ENCODE measurements at regions of chr21 and their contacts with region 1.

Region 1: DNA sequence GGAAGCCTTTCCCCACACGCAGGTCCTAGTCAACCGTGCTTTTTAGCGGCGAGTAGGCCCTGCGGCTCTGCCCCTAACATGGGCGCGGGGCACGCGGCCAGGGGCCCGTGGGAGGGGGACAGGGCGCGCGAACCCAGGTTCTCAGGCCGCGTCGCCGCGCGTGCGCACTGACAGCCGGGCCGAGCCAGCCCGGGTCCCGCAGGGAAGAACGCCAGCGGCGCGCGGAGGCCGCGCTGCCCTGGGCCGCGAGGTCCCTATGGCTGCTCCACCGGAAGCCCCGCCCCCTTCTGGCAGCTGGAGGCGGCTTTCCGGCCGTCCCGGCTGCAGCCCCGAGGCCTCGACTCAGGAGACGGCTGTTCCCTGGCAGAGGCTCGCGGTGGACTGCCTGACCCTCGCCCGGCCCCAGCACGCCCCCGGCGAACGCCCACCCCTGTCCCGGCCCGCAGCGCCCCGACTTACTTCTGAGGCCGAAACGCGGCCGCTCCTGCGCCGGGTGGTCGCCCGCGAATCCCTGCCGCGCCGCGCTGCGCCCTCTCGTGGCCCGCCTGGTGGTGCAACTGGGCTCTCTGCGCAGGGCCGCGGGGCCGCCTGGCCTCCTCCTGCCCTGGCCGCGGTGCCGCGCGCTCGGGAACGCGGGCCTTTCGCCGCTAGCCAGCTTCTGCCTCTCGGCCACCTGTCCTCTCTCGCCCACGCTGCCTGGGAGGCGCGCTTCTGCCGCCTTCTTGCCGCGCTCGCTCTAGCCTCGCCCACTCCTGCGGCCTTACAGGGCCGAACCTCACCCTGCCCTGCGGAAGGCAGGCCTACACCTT is 16.6 kb upstream of the RIPPLY3 start:
- DNase-seq: peak; percentile 89
- H3K4me3 Mint-ChIP-seq: peak overlapping the region; percentile 80
- H3K27ac Mint-ChIP-seq: peak overlapping the region; percentile 65
- H3K4me1 Mint-ChIP-seq: peaks cover 38% of the 10 kb centered on the region
- H3K27me3 Mint-ChIP-seq: no peaks in the 10 kb centered on the region

Region 2: GRCh38 chr21:36908260-36908908 is 81.5 kb before region 1 on chr21:
- CTCF ChIA-PET with region 1: no interaction called
- intact Hi-C with region 1: no loop called
- DNase-seq: no peak
- H3K4me3 Mint-ChIP-seq: no peak overlapping the region
- H3K27ac Mint-ChIP-seq: no peak overlapping the region
- H3K4me1 Mint-ChIP-seq: peaks cover 15% of the 10 kb centered on the region
- H3K27me3 Mint-ChIP-seq: no peaks in the 10 kb centered on the region

Region 3: DNA sequence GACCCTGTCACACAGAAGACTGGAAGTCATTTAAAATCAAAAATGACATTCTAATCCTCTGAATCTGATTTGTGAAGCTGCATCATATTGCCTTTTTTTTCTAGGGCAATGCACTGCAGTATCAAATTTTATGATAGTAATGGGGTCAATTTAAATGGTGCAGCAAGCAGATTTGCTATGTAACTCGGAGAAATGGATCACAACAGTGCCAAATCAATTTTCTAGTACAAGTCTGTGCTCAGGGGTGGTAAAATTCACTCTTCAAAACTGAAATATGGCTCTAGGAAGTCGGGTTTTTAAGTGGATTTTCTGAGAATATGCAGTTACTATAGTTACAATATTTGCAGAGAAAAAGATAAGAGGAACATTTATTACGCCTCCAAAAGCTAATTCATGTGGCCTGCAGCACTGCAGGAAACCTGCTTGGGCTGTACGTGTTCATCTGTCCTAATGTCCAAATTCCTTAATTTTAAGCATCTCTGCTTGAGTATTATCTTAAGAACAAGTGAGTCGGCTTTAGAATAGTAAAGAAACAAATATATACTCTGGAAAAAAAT is 55.0 kb before region 1 on chr21:
- CTCF ChIA-PET with region 1: interaction called, 3 read pairs
- intact Hi-C with region 1: loop called (anchors 1 kb)
- DNase-seq: no peak
- H3K4me3 Mint-ChIP-seq: no peak overlapping the region
- H3K27ac Mint-ChIP-seq: no peak overlapping the region
- H3K4me1 Mint-ChIP-seq: no peaks in the 10 kb centered on the region
- H3K27me3 Mint-ChIP-seq: no peaks in the 10 kb centered on the region

Region 4: GRCh38 chr21:36966066-36966820 is 23.7 kb before region 1 on chr21 and contains the start of gene HLCS:
- CTCF ChIA-PET with region 1: interaction called, 12 read pairs
- intact Hi-C with region 1: loop called (anchors 1 kb)
- DNase-seq: peak; percentile 72
- H3K4me3 Mint-ChIP-seq: peak within 1 kb of the TSS; percentile 78
- H3K27ac Mint-ChIP-seq: peak within 1 kb of the TSS; percentile 86
- H3K4me1 Mint-ChIP-seq: peaks cover 12% of the 10 kb centered on the region
- H3K27me3 Mint-ChIP-seq: no peaks in the 10 kb centered on the region
- total RNA-seq, gene HLCS: 12.5 to 12.6 TPM

Region 5: DNA sequence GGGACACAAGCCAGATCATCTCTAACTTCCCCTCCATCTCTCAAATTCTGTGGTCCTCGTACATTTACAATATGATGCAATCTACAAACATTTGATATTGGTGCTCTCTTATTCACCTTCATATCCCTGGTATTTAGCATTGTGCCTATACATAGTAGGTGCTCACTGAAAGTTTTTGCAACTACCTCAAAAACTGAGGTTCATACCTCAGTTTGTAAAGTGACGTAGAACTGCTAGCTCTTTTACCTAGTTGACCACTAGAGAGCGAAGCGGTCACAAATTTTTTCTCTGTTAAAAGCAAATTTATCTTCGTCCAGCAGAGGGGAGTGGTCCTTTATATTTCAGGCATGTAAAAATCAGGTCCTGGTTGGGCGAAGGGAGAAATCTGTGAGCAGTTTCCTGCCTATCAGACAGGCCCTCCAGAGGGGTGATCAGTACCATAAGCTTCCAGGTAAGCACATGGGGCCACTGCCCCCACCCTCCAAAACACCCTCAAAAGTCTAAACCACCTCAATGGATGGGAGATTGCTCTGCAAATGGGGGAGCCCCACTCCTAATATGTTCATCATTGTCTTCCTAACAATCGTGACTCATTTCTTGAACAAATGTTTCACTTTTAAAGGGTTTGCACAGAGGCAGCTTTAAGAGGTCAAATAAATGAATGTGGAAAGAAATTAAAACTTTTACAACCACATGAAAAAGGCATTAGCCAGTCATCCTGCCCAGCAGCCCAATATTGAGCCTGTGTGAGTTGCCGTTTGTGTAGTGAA is 12.8 kb before region 1 on chr21:
- CTCF ChIA-PET with region 1: interaction called, 21 read pairs
- intact Hi-C with region 1: loop called (anchors 1 kb)
- DNase-seq: peak; percentile 75
- H3K4me3 Mint-ChIP-seq: no peak overlapping the region
- H3K27ac Mint-ChIP-seq: no peak overlapping the region
- H3K4me1 Mint-ChIP-seq: peaks cover 23% of the 10 kb centered on the region
- H3K27me3 Mint-ChIP-seq: peaks cover 9% of the 10 kb centered on the region

Region 6: DNA sequence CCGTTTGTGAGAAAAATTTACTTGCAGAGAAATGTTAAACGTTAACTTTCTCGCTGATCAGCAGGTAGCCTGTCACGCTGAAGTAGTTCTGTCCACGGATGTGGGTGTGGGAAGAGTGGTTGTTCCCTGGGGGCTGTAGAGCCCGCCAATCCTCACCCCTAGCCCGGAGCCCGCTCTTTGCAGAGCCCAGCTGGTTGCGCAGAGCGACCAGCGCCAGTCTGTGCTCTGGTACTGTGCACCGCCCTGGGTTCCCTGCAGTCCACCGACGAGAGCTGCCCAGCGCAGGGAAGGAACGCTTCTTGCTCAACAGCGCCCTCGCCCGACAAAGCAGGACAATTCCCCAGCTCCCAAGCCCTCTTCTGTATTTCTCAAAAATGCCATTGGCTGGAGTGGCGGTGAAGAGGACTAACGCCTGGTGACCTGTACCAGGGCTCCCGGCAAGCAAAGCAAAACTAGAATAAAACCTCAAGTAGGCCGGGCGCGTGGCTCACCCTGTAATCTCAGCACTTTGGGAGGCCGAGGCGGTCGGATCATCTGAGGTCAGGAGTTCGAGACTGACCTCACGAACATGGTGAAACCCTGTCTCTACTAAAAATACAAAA is 19.9 kb after region 1 on chr21:
- CTCF ChIA-PET with region 1: interaction called, 13 read pairs
- intact Hi-C with region 1: no loop called
- DNase-seq: peak; percentile 87
- H3K4me3 Mint-ChIP-seq: no peak overlapping the region
- H3K27ac Mint-ChIP-seq: no peak overlapping the region
- H3K4me1 Mint-ChIP-seq: peaks cover 14% of the 10 kb centered on the region
- H3K27me3 Mint-ChIP-seq: peaks cover 41% of the 10 kb centered on the region

Region 7: GRCh38 chr21:37563641-37564340 is 573.9 kb after region 1 on chr21:
- CTCF ChIA-PET with region 1: no interaction called
- intact Hi-C with region 1: loop called (anchors 10 kb)
- DNase-seq: peak; percentile 92
- H3K4me3 Mint-ChIP-seq: peak overlapping the region; percentile 88
- H3K27ac Mint-ChIP-seq: peak overlapping the region; percentile 99
- H3K4me1 Mint-ChIP-seq: peaks cover 20% of the 10 kb centered on the region
- H3K27me3 Mint-ChIP-seq: no peaks in the 10 kb centered on the region